ENCODE measurements at regions of chr16 and their contacts with region 1.

Region 1: GRCh38 chr16:75099756-75100602 is 16.6 kb downstream of the LDHD start:
- DNase-seq: peak; percentile 37
- H3K4me3 Mint-ChIP-seq: peak overlapping the region; percentile 41
- H3K27ac Mint-ChIP-seq: peak overlapping the region; percentile 88
- H3K4me1 Mint-ChIP-seq: peaks cover 50% of the 10 kb centered on the region
- H3K27me3 Mint-ChIP-seq: no peaks in the 10 kb centered on the region

Region 2: GRCh38 chr16:74888208-74888852 is 211.6 kb before region 1 on chr16:
- intact Hi-C with region 1: no loop called
- DNase-seq: no peak
- H3K4me3 Mint-ChIP-seq: no peak overlapping the region
- H3K27ac Mint-ChIP-seq: no peak overlapping the region
- H3K4me1 Mint-ChIP-seq: peaks cover 1% of the 10 kb centered on the region
- H3K27me3 Mint-ChIP-seq: no peaks in the 10 kb centered on the region

Region 3: GRCh38 chr16:74998481-74999218 is 101.3 kb before region 1 on chr16 and contains the start of gene ZNRF1:
- intact Hi-C with region 1: loop called (anchors 1 kb)
- DNase-seq: peak; percentile 67
- H3K4me3 Mint-ChIP-seq: peak within 1 kb of the TSS; percentile 86
- H3K27ac Mint-ChIP-seq: peak within 1 kb of the TSS; percentile 80
- H3K4me1 Mint-ChIP-seq: peaks cover 39% of the 10 kb centered on the region
- H3K27me3 Mint-ChIP-seq: peaks cover 16% of the 10 kb centered on the region
- total RNA-seq, gene ZNRF1: 34.8 and 36.6 TPM in 2 replicates

Region 4: GRCh38 chr16:75011634-75012307 is 88.2 kb before region 1 on chr16:
- intact Hi-C with region 1: loop called (anchors 1 kb)
- DNase-seq: no peak
- H3K4me3 Mint-ChIP-seq: peak overlapping the region; percentile 66
- H3K27ac Mint-ChIP-seq: peak overlapping the region; percentile 95
- H3K4me1 Mint-ChIP-seq: peaks cover 42% of the 10 kb centered on the region
- H3K27me3 Mint-ChIP-seq: no peaks in the 10 kb centered on the region

Region 5: GRCh38 chr16:75023009-75023408 is 77.0 kb before region 1 on chr16:
- intact Hi-C with region 1: loop called (anchors 1 kb)
- DNase-seq: no peak
- H3K4me3 Mint-ChIP-seq: no peak overlapping the region
- H3K27ac Mint-ChIP-seq: peak overlapping the region; percentile 84
- H3K4me1 Mint-ChIP-seq: peaks cover 23% of the 10 kb centered on the region
- H3K27me3 Mint-ChIP-seq: no peaks in the 10 kb centered on the region

Region 6: GRCh38 chr16:75064403-75065148 is 35.4 kb before region 1 on chr16:
- intact Hi-C with region 1: loop called (anchors 5 kb)
- DNase-seq: no peak
- H3K4me3 Mint-ChIP-seq: peak overlapping the region; percentile 63
- H3K27ac Mint-ChIP-seq: peak overlapping the region; percentile 69
- H3K4me1 Mint-ChIP-seq: peaks cover 36% of the 10 kb centered on the region
- H3K27me3 Mint-ChIP-seq: no peaks in the 10 kb centered on the region

Region 7: GRCh38 chr16:75074920-75075687 is 24.9 kb before region 1 on chr16:
- intact Hi-C with region 1: loop called (anchors 1 kb)
- DNase-seq: peak; percentile 84
- H3K4me3 Mint-ChIP-seq: peak overlapping the region; percentile 69
- H3K27ac Mint-ChIP-seq: peak overlapping the region; percentile 90
- H3K4me1 Mint-ChIP-seq: peaks cover 55% of the 10 kb centered on the region
- H3K27me3 Mint-ChIP-seq: no peaks in the 10 kb centered on the region

Region 8: GRCh38 chr16:75218256-75219070 is 118.5 kb after region 1 on chr16 and contains the start of gene CTRB1:
- intact Hi-C with region 1: no loop called
- DNase-seq: no peak
- H3K4me3 Mint-ChIP-seq: peak within 1 kb of the TSS; percentile 53
- H3K27ac Mint-ChIP-seq: peak within 1 kb of the TSS; percentile 4
- H3K4me1 Mint-ChIP-seq: peaks cover 1% of the 10 kb centered on the region
- H3K27me3 Mint-ChIP-seq: no peaks in the 10 kb centered on the region
- total RNA-seq, gene CTRB1: not detected in 2 replicates